Endothelial cell of umbilical vein (primary cell): ENCODE measurements at regions of chr1 and their contacts with region 1.

Region 1: DNA sequence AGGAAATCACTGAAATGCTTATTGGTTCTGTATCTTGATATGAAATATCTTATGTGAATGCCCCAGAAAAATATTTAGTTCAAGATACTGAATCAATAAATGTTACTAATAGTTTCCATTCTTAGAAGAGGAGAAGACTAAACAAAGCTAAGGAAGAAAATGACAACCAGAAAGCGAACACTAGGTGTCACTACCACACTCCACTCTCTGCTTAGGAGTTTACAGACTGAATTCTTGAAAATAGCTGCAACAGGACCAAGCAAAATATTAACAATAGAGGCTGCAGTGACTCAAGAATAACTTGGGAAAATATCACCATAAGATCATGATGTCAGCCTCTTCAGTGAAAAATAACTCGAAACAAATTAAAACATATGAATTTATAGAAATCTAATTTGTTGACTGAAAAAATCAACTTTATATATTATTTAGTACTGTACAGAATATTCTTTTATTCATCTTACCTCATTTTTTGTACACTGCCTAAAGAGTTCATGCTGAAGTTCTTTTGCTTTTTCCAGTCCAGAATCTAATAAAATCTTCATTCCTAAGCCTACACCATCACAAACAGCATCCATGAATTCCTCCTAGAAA is 61.6 kb downstream of the KIF14 start:
- DNase-seq: peak; percentile 84
- H3K4me3 ChIP-seq: no peak overlapping the region
- H3K27ac ChIP-seq: no peak overlapping the region
- H3K4me1 ChIP-seq: no peaks in the 10 kb centered on the region
- H3K27me3 ChIP-seq: no peaks in the 10 kb centered on the region
- CTCF ChIP-seq: peak; percentile 40 to 54
- POLR2A ChIP-seq: no peak

Region 2: DNA sequence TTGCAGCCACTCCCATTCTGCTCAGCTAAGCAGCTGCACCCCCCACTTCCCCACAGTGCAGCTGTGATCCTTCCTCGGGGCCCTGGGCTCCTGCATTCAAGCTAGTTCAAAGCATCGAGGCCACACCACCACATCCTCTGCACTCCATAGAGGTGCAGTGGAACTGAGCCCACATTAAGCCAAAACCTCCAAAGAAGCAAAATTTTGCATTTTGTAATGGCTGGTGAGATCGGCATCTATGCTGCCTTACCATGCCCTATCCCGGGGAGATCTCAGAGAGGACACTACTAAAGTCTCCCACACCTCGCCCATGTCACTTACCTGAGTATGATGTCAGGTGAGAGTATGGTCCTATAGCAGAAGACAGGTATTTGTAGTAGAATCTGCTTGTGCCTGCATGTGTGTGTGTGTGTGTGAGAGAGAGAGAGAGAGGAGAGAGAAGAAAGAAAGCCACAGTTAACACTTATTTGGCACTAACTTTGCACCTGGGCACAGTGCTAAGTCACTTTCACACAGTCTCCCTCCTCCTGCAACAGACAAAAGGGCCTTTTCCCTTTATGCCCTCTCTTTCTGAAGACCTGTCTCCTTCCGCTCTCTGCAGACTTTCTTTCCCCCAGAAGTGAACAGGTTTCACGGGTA is 28.2 kb before region 1 on chr1:
- CTCF ChIA-PET with region 1: interaction called, 22 read pairs
- POLR2A ChIA-PET with region 1: no interaction called
- dilution Hi-C with region 1: no loop called
- intact Hi-C with region 1: no loop called
- DNase-seq: no peak
- H3K4me3 ChIP-seq: no peak overlapping the region
- H3K27ac ChIP-seq: no peak overlapping the region
- H3K4me1 ChIP-seq: no peaks in the 10 kb centered on the region
- H3K27me3 ChIP-seq: peaks cover 0 to 1% of the 10 kb centered on the region in 2 experiments
- CTCF ChIP-seq: no peak
- POLR2A ChIP-seq: no peak

Region 3: GRCh38 chr1:200837931-200838571 is 279.1 kb after region 1 on chr1:
- CTCF ChIA-PET with region 1: interaction called, 9 read pairs
- POLR2A ChIA-PET with region 1: no interaction called
- dilution Hi-C with region 1: no loop called
- intact Hi-C with region 1: loop called (anchors 2 kb)
- DNase-seq: peak; percentile 60
- H3K4me3 ChIP-seq: no peak overlapping the region
- H3K27ac ChIP-seq: no peak overlapping the region
- H3K4me1 ChIP-seq: no peaks in the 10 kb centered on the region
- H3K27me3 ChIP-seq: no peaks in the 10 kb centered on the region
- CTCF ChIP-seq: peak; percentile 11 to 16
- POLR2A ChIP-seq: no peak

Region 4: GRCh38 chr1:201042779-201043461 is 484.0 kb after region 1 on chr1:
- CTCF ChIA-PET with region 1: interaction called, 9 read pairs
- POLR2A ChIA-PET with region 1: no interaction called
- dilution Hi-C with region 1: no loop called
- intact Hi-C with region 1: loop called (anchors 2 kb)
- DNase-seq: peak; percentile 73
- H3K4me3 ChIP-seq: no peak overlapping the region
- H3K27ac ChIP-seq: no peak overlapping the region
- H3K4me1 ChIP-seq: no peaks in the 10 kb centered on the region
- H3K27me3 ChIP-seq: peaks cover 0 to 2% of the 10 kb centered on the region in 2 experiments
- CTCF ChIP-seq: peak; percentile 86 to 91
- POLR2A ChIP-seq: no peak

Region 5: DNA sequence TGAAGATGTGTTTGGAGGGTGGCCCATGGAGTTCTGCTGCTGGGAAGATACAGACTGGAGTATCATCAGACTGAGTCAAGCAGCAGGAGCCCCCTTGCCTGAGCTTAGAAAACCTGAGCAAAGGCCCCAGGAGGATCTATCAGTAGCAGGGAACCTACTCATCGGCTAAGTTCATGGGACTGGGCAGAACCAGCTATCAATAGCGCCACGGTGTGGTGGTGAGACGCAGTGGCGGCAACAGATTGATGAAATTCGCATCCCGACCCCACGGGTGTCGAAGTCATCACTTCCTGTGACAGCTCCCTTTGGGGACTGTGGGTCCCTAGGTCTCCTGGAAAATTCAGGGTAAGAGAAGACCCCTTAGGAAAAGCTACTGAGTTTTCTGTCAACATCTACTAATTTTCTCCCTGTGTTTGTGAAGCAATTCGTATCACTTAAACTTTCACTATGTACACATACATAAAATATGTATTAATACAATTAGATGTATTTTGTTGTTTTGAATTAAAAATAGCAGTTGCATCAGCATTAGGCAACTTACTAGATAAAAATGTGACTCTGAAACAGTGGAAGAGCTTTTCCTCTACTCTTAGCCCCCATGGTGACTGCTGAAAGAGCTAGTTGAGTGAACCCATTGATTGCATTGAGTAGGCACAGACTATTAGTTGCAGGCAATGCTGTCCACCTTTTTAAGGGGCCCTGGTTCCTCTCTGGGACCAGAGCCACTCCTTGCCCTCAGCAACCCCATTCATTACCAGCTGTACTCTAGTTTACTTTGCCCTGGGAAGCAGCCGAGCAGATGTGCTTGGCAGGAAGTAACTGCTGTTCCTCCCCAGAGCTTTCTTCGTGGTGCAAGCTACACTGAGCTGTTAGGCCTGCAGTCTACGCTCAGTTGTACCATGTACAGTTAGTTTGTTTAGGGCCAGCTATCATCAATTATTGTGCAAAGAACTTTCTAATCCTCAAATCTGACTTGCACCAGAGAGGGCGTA is 560.5 kb after region 1 on chr1:
- CTCF ChIA-PET with region 1: interaction called, 18 read pairs
- POLR2A ChIA-PET with region 1: no interaction called
- dilution Hi-C with region 1: no loop called
- intact Hi-C with region 1: loop called (anchors 10 kb)
- DNase-seq: peak; percentile 47
- H3K4me3 ChIP-seq: no peak overlapping the region
- H3K27ac ChIP-seq: no peak overlapping the region
- H3K4me1 ChIP-seq: no peaks in the 10 kb centered on the region
- H3K27me3 ChIP-seq: peaks cover 36 to 55% of the 10 kb centered on the region in 2 experiments
- CTCF ChIP-seq: peak; percentile 69 to 79
- POLR2A ChIP-seq: no peak